Left colon (tissue), 2 donors: ENCODE measurements at regions of chr10 and their contacts with region 1.

Region 1: DNA sequence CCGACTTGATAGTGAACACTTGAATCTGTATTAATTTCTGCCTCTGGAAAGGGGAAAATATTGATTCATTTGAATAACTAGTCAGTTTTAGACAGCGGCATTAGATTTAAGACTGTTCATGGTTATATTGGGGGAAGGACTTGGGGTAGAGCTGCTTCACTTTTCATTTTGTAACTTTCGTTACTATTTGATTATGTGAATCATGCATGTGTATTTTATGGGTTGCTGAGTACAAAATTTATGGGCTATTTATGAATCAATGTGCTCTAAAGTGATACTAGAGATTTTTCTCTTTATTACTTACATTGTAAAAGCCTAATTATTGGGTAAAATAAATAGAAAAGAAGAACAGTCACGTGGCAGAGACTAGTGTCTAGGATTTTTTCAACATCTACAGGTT is 4.9 kb downstream of the GLUD1 start:
- DNase-seq: no peak
- ATAC-seq: no peak

Region 2: GRCh38 chr10:86710987-86711512 is 378.7 kb before region 1 on chr10:
- intact Hi-C with region 1: no loop called
- DNase-seq: peak; percentile 85 to 89
- ATAC-seq: peak; percentile 95

Region 3: GRCh38 chr10:86971232-86971991 is 118.3 kb before region 1 on chr10:
- intact Hi-C with region 1: loop called in 1 of 2 experiments (anchors 10 kb)
- DNase-seq: peak; percentile 89 to 92
- ATAC-seq: peak; percentile 78